ENCODE measurements at regions of chr10 and their contacts with region 1.

Region 1: GRCh38 chr10:88932539-88933256 is 19.9 kb downstream of the ACTA2 start:
- DNase-seq: peak; percentile 58
- ATAC-seq: peak; percentile 72
- H3K4me3 Mint-ChIP-seq: no peak overlapping the region
- H3K27ac Mint-ChIP-seq: peak overlapping the region; percentile 26
- H3K4me1 Mint-ChIP-seq: peaks cover 14% of the 10 kb centered on the region
- H3K27me3 Mint-ChIP-seq: no peaks in the 10 kb centered on the region

Region 2: DNA sequence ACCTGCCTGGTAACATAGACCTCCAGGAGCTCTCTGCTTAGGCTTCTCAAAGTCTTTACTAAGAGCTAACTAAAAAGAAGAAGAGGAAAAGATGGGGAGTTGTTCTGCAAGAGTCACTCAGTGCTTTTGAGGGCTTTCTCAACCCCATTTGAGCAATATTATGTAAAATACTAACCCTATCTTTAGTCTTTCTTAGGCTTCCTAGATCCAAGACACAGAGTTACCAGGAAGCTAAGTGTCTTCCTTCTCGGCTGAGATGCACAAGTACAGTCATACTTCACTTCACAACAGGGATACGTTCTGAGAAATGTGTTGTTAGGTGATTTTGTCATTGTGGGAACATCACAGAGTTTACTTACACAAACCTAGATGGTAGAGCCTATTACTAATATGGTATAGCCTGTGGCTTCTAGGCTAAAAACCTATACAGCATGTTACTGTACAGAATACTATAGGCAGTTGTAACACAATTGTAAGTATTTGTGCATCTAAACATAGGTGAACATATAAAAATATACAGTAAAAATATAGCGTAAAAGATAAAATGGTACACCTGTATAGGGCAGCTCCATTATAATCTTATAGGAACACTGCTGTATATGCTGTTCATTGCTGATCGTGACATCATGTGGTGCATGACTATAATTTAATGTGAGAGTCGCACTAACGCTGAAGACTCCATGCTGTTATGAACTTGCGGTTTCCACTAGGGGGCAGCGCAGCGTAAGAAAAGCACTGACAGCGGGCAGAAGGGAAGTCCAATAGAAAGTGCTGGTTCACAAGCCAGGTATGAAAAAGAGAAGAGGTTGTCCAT is 97.4 kb before region 1 on chr10:
- CTCF ChIA-PET with region 1: interaction called, 219 read pairs
- DNase-seq: peak; percentile 95
- ATAC-seq: peak; percentile 91
- H3K4me3 Mint-ChIP-seq: no peak overlapping the region
- H3K27ac Mint-ChIP-seq: no peak overlapping the region
- H3K4me1 Mint-ChIP-seq: peaks cover 34% of the 10 kb centered on the region
- H3K27me3 Mint-ChIP-seq: no peaks in the 10 kb centered on the region

Region 3: DNA sequence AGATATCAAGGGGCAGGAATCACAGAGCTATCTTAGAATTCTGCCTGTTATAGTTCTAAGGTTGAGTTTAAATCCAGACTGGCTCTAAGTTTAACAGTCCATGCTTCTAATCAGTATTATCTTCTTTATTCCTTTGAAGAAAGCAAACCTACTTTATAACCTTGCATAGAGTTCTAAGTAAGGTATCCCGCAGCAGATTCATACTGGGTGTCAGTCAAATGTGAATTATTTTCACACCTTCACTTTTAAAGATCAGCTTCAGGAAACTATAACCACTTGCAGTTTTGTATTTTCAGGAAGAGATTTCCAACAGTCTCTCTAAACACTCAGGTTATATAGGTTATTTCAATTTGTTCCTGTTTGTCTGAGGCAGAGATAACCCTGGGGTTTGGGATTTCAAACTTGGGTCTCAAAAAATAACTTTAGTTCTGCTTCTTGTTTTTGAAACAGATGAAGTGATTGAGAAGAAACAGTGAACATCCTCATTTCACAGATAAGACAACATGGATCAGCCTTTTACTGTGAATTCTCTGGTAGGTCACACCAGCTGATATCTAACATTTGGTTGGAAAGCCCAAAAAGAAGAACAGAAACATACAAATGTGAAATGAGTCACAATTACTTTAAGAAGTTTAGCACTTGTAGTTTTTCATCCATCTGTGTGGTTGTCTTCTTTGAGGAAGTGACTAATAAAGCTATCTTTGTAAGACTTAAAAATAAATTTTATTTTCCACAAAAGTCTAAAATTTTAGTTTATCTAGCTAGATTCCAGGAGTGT is 31.3 kb before region 1 on chr10:
- CTCF ChIA-PET with region 1: interaction called, 11 read pairs
- DNase-seq: no peak
- ATAC-seq: peak; percentile 73
- H3K4me3 Mint-ChIP-seq: no peak overlapping the region
- H3K27ac Mint-ChIP-seq: peak overlapping the region; percentile 61
- H3K4me1 Mint-ChIP-seq: peaks cover 47% of the 10 kb centered on the region
- H3K27me3 Mint-ChIP-seq: no peaks in the 10 kb centered on the region

Region 4: DNA sequence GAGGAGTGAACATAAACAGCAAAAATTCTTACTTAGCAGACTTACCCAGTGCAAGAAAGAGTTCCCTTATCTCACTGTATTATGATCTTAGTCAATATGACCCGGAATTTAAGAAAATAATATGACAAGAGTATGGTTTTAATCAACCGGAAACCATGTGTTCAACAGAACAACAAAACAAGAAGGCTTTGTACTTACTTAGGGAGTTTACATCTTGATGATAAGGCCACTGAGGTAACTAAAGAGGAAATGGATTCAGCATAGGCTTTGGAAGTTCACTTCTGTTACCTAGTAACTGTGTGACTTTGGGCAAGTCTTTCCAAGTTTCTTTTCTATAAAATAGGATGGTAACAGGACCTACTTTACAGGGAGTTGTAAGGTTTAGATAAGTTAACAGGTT is 50.5 kb after region 1 on chr10:
- CTCF ChIA-PET with region 1: interaction called, 10 read pairs
- DNase-seq: no peak
- ATAC-seq: no peak
- H3K4me3 Mint-ChIP-seq: no peak overlapping the region
- H3K27ac Mint-ChIP-seq: no peak overlapping the region
- H3K4me1 Mint-ChIP-seq: peaks cover 40% of the 10 kb centered on the region
- H3K27me3 Mint-ChIP-seq: no peaks in the 10 kb centered on the region

Region 5: GRCh38 chr10:89029785-89030437 is 97.2 kb after region 1 on chr10:
- CTCF ChIA-PET with region 1: interaction called, 22 read pairs
- DNase-seq: peak; percentile 80
- ATAC-seq: peak; percentile 72
- H3K4me3 Mint-ChIP-seq: no peak overlapping the region
- H3K27ac Mint-ChIP-seq: no peak overlapping the region
- H3K4me1 Mint-ChIP-seq: peaks cover 22% of the 10 kb centered on the region
- H3K27me3 Mint-ChIP-seq: no peaks in the 10 kb centered on the region

Region 6: DNA sequence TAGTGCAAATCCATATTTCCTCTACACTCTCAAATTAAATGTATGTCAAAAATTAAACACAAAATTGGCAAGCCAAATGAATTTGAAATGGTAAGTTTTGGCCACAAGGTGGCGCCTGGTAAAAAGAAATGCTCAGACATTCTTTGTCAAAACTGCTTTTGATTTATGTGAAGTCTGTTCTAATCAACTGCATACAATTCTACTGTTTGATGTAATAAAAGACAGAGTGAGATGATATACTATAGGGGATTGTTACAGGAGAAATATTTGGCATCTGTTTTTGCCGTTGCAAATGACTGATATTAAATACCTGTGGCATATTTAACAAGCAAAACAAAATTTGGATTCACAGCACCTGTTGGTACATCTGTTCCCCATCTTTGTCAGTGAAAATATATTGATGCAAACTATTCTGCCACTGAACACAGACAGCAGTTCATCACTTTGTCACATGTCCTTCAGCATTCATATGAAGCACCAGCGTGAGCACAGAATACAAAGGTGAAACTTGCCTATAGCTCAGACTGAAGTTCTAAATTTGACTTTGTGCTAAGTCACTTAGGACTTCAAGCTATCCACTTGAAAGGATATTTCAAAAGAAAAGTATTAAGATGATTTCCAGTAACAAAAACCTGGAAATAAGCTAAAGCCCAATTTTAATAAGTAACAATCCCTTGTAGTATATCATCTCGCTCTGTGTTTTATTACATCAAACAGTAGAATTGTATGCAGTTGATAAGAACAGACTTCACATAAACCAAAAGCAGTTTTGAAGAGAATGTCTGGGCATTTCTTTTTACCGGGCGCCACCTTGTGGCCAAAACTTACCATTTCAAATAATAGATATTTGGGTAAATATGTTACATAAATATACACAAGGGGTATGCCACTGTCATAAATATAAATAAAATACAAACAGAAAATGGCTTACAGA is 284.6 kb after region 1 on chr10:
- CTCF ChIA-PET with region 1: interaction called, 42 read pairs
- DNase-seq: peak; percentile 76
- ATAC-seq: peak; percentile 53
- H3K4me3 Mint-ChIP-seq: no peak overlapping the region
- H3K27ac Mint-ChIP-seq: peak overlapping the region; percentile 72
- H3K4me1 Mint-ChIP-seq: peaks cover 15% of the 10 kb centered on the region
- H3K27me3 Mint-ChIP-seq: no peaks in the 10 kb centered on the region

Measured in activated CD8-positive, alpha-beta memory T cell treated with anti-CD3 and anti-CD28 coated beads, Interleukin-2, amount 10 ng/mL, durations not matched to agents 7 days and 5 days (primary cell).